Endothelial cell of umbilical vein (primary cell): ENCODE measurements at regions of chr19 and their contacts with region 1.

Region 1: DNA sequence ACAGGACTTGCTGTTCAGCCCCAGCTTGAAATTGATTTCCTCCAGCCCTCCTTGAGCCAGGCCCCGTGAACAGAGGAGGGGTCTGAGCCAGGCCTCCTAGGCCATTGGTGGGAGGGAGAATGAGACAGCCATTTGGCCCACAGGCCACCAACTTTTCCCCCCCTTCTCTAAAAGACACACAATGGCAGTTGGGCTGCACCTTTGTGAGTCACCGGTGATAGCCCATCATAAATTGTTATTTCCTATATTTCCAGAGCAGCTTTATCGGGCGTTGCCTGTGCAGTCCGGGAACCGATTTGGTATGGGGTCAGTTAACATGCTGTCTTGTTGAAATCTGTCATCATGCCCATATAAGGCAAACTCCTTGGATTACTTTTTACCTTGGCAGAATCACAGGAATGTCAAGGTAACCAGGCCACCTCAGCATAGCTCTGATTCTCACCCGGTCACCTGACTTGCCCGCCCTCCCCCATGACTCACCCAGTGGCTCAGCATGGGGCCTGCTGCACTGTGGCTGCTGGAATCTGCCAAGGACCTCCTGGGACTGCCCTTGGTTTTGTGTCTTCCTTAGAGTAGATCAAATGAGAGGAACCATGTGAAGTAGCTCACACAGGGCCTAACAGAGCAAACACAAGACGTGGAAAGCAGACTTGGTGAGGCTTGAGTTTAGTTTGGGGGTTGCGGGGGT is 36.1 kb downstream of the ACTN4 start:
- DNase-seq: peak; percentile 89
- H3K4me3 ChIP-seq: no peak overlapping the region
- H3K27ac ChIP-seq: peak overlapping the region; percentile 90
- H3K4me1 ChIP-seq: peaks cover 66% of the 10 kb centered on the region
- H3K27me3 ChIP-seq: no peaks in the 10 kb centered on the region
- CTCF ChIP-seq: no peak
- POLR2A ChIP-seq: no peak

Region 2: GRCh38 chr19:38658462-38659306 is 24.9 kb before region 1 on chr19:
- CTCF ChIA-PET with region 1: interaction called, 10 read pairs
- POLR2A ChIA-PET with region 1: interaction called, 5 read pairs
- dilution Hi-C with region 1: no loop called
- intact Hi-C with region 1: loop called (anchors 2 kb)
- DNase-seq: peak; percentile 98
- H3K4me3 ChIP-seq: no peak overlapping the region
- H3K27ac ChIP-seq: peak overlapping the region; percentile 87
- H3K4me1 ChIP-seq: peaks cover 66% of the 10 kb centered on the region
- H3K27me3 ChIP-seq: no peaks in the 10 kb centered on the region
- CTCF ChIP-seq: no peak
- POLR2A ChIP-seq: no peak

Region 3: DNA sequence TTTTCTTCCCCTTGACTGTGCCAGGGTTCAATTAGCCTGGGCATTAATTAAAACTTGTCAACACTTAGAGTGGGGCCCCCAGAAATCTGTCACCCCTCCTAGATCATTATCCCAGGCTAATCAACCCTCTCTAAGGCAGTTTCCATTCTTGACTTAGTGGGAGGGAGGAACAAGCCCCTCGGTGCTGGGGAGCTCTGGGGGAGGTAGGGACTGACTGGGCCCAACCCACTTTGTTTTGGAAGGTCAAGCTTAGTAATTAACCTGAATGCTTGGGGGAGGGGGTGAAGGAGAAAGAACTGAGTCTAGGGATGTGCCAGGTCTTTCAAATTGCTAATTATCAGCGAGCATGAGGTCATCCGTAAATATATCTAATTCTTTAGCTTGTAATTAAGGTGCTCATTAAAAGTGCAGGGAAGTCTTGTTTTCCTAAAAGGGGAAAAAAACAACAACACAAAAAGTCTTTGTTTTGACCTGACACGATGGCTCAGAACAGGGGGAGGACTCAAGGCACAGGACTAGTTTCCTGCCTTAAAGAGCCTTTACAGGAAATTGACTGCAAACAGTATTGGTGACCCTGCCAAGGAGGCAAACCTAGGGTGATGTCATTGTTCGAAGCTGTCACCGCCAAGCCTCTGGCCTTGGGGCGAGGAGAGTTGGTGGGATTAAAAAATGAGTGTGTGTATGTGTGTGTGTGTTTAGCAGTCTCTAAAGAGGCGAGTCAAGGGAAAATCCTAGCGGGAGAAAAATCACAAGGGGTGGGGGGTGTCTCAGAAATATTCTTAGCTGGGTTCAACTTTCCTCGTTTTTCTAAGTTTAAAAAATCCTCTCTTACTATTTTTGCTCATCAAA is 16.6 kb before region 1 on chr19:
- CTCF ChIA-PET with region 1: interaction called, 10 read pairs
- POLR2A ChIA-PET with region 1: interaction called, 4 read pairs
- dilution Hi-C with region 1: no loop called
- intact Hi-C with region 1: loop called (anchors 1 kb)
- DNase-seq: peak; percentile 90
- H3K4me3 ChIP-seq: peak overlapping the region in 1 of 3 experiments; percentile 5
- H3K27ac ChIP-seq: peak overlapping the region; percentile 95
- H3K4me1 ChIP-seq: peaks cover 82% of the 10 kb centered on the region
- H3K27me3 ChIP-seq: no peaks in the 10 kb centered on the region
- CTCF ChIP-seq: no peak
- POLR2A ChIP-seq: peak; percentile 12

Region 4: DNA sequence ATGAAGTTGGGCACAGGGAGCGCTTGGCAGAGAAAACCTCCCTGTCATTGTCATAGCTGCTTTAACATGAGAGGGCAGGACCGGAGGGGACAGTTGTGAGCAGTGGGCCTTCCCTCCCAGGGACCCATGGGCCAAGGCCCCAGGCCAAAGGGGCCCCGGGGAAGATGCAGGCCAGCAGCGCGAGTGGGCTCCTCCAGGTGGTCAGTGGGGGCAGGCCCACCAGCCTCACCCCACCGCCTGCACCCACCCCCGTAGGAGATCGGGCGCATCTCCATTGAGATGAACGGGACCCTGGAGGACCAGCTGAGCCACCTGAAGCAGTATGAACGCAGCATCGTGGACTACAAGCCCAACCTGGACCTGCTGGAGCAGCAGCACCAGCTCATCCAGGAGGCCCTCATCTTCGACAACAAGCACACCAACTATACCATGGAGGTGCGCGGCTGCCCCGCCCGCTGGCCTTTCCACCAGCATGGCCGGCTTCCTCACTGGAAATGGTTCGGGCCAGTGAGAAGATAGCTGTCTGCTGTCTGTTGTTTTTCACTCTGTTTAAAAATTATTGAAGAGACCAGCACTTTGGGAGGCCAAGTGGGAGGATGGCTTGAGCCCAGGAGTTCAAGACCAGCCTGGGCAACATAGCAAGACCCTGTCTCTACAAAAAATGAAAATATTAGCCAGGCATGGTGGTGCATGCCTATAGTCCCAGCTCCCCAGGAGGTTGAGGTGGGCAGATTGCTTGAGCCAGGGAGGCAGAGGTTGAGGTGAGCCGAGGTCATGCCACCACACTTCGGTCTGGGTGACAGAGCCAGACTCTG is 42.1 kb after region 1 on chr19:
- CTCF ChIA-PET with region 1: no interaction called
- POLR2A ChIA-PET with region 1: no interaction called
- dilution Hi-C with region 1: no loop called
- intact Hi-C with region 1: no loop called
- DNase-seq: no peak
- H3K4me3 ChIP-seq: no peak overlapping the region
- H3K27ac ChIP-seq: no peak overlapping the region
- H3K4me1 ChIP-seq: no peaks in the 10 kb centered on the region
- H3K27me3 ChIP-seq: no peaks in the 10 kb centered on the region
- CTCF ChIP-seq: no peak
- POLR2A ChIP-seq: no peak